ENCODE measurements at regions of chr1 and their contacts with region 1.

Region 1: DNA sequence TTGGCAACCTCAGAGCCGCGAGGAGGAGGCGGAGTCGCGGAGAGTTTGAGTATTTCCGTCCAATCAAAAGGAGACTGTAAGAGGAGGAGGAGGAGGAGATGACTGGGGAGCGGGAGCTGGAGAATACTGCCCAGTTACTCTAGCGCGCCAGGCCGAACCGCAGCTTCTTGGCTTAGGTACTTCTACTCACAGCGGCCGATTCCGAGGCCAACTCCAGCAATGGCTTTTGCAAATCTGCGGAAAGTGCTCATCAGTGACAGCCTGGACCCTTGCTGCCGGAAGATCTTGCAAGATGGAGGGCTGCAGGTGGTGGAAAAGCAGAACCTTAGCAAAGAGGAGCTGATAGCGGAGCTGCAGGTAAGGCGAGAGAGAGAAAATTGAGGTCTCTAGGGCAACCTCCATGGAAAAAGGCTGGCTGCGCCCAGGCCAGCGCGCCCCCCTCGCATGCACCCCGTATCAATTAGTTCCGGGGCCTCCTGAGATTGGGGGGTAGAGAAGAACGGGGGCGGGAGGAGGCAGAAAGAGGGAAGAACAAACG is at the start of gene PHGDH:
- DNase-seq: peak; percentile 87
- H3K4me3 ChIP-seq: peak within 1 kb of the TSS; percentile 53 to 72 (median 67)
- H3K27ac ChIP-seq: peak within 1 kb of the TSS; percentile 78 to 89 (median 82)
- H3K4me1 ChIP-seq: peaks cover 0 to 30% (median 19%) of the 10 kb centered on the region in 4 donors
- H3K27me3 ChIP-seq: no peaks in the 10 kb centered on the region
- CTCF ChIP-seq: no peak
- EP300 ChIP-seq: no peak
- POLR2A ChIP-seq: peak; percentile 26 to 56
- total RNA-seq, gene PHGDH: 15.8 to 37.7 (median 26.0) TPM

Region 2: DNA sequence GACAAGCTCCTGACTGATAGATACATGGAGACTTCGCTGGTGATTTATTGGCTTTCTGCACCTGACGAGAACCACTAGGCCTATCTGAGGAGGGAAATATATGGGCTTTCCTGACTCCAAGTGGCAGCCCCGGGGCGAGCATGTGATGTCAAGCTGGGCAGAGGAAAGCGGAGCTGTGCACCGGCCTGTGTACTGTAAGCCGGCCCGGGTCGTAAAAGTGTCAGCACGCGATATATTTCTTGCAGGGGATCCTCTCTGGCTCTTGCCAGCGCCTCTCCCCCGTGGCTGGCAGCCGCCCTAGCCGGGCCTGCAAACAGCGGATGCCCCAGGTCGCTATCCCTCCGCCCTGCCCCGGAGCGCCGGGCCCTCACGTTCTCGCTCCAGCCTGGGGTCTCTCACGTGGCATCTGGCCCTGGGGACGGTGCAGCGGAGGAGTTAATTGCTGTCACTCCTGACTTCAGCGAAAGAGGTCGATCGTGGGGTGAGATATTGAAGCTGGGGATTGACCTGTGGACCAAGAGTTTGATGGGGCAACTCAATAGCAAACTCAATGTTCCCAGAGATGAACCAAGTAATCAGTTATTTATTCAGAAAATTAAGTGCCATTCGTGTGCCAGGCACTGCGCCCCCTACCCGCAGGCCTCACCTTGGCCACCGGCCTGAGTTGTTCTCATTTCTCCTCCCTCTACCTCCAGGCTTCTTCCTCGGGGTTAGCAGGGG is 384.3 kb before region 1 on chr1:
- intact Hi-C with region 1: loop called (anchors 5 kb)
- DNase-seq: peak; percentile 96
- H3K4me3 ChIP-seq: peak overlapping the region; percentile 30 to 51 (median 44)
- H3K27ac ChIP-seq: peak overlapping the region in 3 of 4 donors; percentile 73 to 80 (median 74)
- H3K4me1 ChIP-seq: peaks cover 0 to 58% (median 45%) of the 10 kb centered on the region in 4 donors
- H3K27me3 ChIP-seq: no peaks in the 10 kb centered on the region
- CTCF ChIP-seq: peak in 1 of 4 experiments; percentile 18
- EP300 ChIP-seq: peak; percentile 50 to 89 (median 75)
- POLR2A ChIP-seq: no peak

Region 3: DNA sequence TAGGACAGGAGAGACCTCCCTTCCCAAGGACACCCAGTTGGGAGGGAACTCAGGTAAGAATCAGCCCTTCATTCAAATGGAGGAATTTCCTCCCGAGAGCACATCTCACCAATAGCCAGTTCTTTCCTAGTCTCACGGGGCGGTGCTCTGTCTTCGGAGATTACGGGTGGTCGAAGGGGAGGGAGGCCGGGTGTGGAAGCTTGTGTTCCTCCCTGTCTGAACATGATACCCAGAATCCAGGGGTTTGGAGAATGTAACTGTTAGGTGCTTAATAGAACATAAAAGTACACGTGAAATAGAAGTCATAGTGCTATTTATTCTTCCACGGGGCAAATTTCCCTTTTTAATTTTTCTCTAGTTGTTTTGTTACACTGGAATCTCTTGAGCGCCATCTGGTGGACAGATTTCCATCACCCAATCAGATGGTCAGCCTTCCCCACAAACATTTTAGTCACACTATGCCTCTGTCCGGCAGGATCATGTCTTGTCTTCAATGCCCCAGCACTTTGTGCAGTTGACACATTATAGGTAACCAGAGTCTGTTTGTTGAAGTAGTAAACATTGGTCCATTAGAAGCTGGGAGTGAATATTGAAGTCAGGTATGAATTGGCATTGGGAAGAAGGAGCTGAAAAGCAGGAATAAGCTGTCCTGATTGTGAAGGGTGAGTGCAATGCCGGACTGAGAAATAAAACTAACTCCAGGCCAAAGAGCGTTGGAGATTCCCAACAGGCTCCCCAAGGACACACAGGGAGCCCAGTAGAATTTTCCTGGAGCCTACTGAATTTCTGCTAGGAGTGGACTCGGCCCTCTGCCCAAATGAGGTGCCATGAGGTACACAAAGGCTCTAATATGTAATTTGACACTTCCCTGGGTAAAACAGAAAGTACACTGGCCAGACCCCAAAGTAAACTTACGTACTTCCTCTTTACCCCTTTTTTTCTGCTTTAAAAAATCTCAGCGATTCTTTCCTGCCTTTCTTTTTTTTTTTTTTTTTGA is 36.2 kb before region 1 on chr1:
- intact Hi-C with region 1: loop called (anchors 2 kb)
- DNase-seq: peak; percentile 90
- H3K4me3 ChIP-seq: peak overlapping the region; percentile 17 to 40 (median 36)
- H3K27ac ChIP-seq: peak overlapping the region in 3 of 4 donors; percentile 29 to 53 (median 49)
- H3K4me1 ChIP-seq: peaks cover 0 to 5% (median 0%) of the 10 kb centered on the region in 4 donors
- H3K27me3 ChIP-seq: no peaks in the 10 kb centered on the region
- CTCF ChIP-seq: peak; percentile 49 to 86 (median 65)
- EP300 ChIP-seq: no peak
- POLR2A ChIP-seq: no peak

Measured in sigmoid colon (tissue), 7 donors.